ENCODE measurements at regions of chr11 and their contacts with region 1.

Region 1: DNA sequence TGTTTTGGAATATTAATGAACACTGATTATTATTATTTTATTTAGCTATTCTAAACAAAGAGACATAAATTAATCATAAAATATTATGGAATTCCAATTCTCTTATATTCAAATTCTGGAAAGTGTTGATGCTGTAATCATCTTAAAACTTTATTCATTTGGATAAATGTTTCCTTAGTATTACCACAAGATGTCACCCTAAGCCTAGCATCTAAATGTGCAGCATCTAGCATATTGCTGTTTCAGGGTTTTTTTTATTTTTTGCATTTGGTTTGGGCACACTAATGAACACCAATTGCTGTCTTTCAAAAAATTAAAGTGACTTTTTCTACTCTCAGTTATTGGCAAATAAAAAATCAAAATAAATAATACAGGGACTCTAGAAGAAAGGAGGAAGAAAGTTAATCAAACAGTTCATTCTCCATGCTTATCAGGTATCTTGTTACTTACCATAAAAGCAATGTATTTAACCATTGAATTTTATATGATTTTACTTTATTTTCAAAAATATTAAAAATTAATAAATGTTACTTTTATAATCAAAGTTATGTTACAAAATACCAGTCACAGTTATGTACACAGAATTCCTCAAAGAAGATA is 31.8 kb downstream of the DLG2 start:
- DNase-seq: peak in 1 of 2 donors; percentile 75
- ATAC-seq: peak; percentile 61 to 75 (median 68)
- H3K4me3 ChIP-seq: no peak overlapping the region
- H3K4me3 Mint-ChIP-seq: no peak overlapping the region
- H3K27ac ChIP-seq: no peak overlapping the region
- H3K27ac Mint-ChIP-seq: no peak overlapping the region
- H3K4me1 ChIP-seq: no peaks in the 10 kb centered on the region
- H3K4me1 Mint-ChIP-seq: no peaks in the 10 kb centered on the region
- H3K27me3 ChIP-seq: no peaks in the 10 kb centered on the region
- H3K27me3 Mint-ChIP-seq: peaks cover 0 to 5% of the 10 kb centered on the region in 2 donors
- CTCF ChIP-seq: peak; percentile 77

Region 2: DNA sequence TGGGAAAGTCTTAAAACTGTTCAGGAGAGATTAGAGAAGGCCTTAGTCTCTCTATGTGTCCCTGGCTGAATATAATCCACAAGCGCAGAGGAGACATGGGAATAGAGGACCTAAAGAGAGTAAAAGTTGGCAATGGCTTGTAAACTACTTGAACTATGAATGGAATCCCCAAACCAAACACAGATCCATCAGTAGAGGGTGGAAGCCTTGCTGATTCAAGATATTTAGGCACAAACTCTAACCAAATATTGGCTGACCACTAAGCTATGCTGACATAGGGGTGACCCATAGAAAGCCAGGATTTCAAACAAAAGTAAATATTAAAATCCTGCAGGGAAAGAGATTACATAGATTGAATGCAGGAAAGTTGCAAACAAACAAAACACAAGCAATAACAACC is 407.4 kb before region 1 on chr11:
- intact Hi-C with region 1: no loop called
- DNase-seq: no peak
- ATAC-seq: no peak
- H3K4me3 ChIP-seq: no peak overlapping the region
- H3K4me3 Mint-ChIP-seq: no peak overlapping the region
- H3K27ac ChIP-seq: no peak overlapping the region
- H3K27ac Mint-ChIP-seq: no peak overlapping the region
- H3K4me1 ChIP-seq: no peaks in the 10 kb centered on the region
- H3K4me1 Mint-ChIP-seq: no peaks in the 10 kb centered on the region
- H3K27me3 ChIP-seq: no peaks in the 10 kb centered on the region
- H3K27me3 Mint-ChIP-seq: no peaks in the 10 kb centered on the region
- CTCF ChIP-seq: no peak

Region 3: DNA sequence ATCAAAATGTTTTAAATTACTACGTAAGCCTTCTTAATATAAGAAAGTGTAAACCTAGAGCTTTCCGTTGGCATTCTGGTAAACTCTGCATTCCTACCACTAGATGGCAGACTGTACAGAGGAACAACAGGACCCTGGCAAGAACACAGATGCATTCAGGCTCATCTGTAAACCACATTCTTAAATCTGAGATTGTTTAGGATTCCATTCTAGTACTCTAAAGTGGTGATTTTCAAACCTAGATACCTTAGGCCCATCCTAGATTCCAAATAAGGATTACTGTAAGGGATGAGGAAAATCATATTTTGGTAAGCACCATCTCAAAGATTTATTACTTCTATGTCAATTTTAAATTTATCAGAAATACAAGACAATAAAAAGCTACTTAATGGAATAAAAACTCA is 446.6 kb after region 1 on chr11:
- intact Hi-C with region 1: loop called (anchors 10 kb)
- DNase-seq: peak in 1 of 2 donors; percentile 88
- ATAC-seq: peak; percentile 92 to 95 (median 95)
- H3K4me3 ChIP-seq: no peak overlapping the region
- H3K4me3 Mint-ChIP-seq: peak overlapping the region; percentile 40
- H3K27ac ChIP-seq: no peak overlapping the region
- H3K27ac Mint-ChIP-seq: peak overlapping the region; percentile 76 to 83
- H3K4me1 ChIP-seq: peaks cover 22% of the 10 kb centered on the region
- H3K4me1 Mint-ChIP-seq: peaks cover 64 to 70% of the 10 kb centered on the region in 2 donors
- H3K27me3 ChIP-seq: no peaks in the 10 kb centered on the region
- H3K27me3 Mint-ChIP-seq: no peaks in the 10 kb centered on the region
- CTCF ChIP-seq: peak; percentile 94

Region 4: DNA sequence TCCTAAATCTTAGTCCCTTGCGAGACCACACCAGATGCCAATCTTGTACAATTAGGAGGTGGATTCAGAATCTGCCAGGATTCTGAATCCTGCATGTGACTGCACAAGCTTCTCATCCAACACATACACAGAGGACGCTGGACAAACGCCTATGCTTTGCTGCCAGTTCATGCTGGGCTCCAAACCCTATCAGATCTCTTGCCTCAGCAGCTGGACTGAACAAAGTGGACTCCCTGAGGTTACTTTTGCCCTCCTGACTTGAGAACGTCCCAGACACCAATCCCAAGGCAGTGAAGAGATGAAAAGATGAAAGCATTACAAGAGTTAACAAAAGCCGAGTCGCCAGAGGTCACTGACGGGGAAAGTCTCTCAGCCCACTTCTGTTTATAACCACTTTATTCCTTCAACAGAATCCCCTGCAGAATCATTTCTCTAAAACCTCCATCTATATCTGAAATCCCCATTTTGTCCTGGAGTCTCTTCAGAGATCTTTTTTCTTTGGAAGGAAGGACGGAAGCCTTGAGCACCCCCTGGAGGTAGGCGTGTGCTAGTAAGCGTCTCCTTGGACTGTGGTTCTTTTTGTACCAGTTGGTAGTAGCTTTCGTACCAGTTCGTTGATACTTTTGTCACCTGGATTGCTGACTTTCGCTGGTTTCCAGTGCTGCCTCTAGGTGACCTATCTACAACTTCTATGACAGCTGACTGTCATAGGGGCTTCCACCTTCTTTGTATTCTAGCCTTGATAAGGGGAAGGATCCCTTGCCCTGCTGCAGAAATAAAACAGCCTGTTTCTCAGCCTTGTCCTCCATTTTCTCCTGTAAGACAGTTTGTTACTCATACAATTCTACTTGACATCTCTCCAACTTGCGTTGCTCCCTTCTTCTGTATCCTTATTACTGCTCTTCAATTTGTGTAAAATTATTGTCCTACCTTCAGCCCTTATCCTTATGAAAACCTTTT is 623.0 kb after region 1 on chr11:
- intact Hi-C with region 1: loop called (anchors 5 kb)
- DNase-seq: peak; percentile 47 to 83
- ATAC-seq: peak; percentile 89 to 96 (median 93)
- H3K4me3 ChIP-seq: no peak overlapping the region
- H3K4me3 Mint-ChIP-seq: peak overlapping the region; percentile 64
- H3K27ac ChIP-seq: peak overlapping the region; percentile 13
- H3K27ac Mint-ChIP-seq: no peak overlapping the region
- H3K4me1 ChIP-seq: peaks cover 11% of the 10 kb centered on the region
- H3K4me1 Mint-ChIP-seq: peaks cover 8% of the 10 kb centered on the region in 2 donors
- H3K27me3 ChIP-seq: no peaks in the 10 kb centered on the region
- H3K27me3 Mint-ChIP-seq: peaks cover 15 to 20% of the 10 kb centered on the region in 2 donors
- CTCF ChIP-seq: peak; percentile 95

Region 5: DNA sequence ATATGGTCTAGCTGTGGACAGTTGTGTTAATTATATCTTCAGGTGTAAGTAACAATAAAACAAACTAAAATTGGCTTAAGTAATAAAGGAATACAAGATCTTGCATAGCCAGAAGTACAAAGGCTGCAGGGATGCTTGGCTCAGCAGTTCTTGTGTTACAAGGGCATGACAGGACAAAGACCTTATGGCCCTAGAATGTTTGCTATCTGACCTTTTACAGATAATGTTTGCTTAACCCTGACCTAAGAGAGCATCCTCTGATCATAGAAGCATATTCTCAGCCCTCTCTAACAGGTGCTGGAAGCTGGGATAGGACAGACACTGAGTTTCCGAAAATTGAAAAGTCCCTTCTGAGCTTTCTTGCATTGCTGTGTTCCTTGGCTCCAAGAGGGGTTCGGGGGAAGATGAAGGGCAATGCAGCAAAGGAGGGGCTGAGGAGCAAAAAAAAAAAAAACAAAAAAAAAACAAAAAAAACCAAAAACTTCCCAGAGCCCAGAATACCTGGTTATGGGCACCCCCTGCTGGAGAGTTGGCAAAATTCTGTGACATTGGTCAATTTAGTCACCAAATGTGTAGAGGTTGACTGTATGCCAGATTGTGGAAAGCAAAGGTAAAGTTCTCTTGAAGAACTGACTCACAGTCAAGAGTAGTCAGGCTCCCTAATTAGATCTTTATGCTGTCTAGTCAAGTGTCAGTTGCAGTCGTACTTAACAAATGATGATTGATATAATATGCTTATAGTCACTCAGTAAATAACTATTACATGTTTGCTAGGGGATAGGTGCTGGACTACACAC is 696.3 kb after region 1 on chr11:
- intact Hi-C with region 1: loop called (anchors 1 kb)
- DNase-seq: peak in 1 of 2 donors; percentile 78
- ATAC-seq: peak; percentile 49 to 79 (median 66)
- H3K4me3 ChIP-seq: no peak overlapping the region
- H3K4me3 Mint-ChIP-seq: no peak overlapping the region
- H3K27ac ChIP-seq: no peak overlapping the region
- H3K27ac Mint-ChIP-seq: no peak overlapping the region
- H3K4me1 ChIP-seq: peaks cover 11% of the 10 kb centered on the region
- H3K4me1 Mint-ChIP-seq: peaks cover 5 to 6% of the 10 kb centered on the region in 2 donors
- H3K27me3 ChIP-seq: no peaks in the 10 kb centered on the region
- H3K27me3 Mint-ChIP-seq: no peaks in the 10 kb centered on the region
- CTCF ChIP-seq: peak; percentile 65

Measured in natural killer cell (primary cell).